Right ventricle myocardium inferior (tissue), 1 donor: ENCODE measurements at regions of chr19 and their contacts with region 1.

Region 1: GRCh38 chr19:34838753-34839431 is 65.9 kb upstream of the ZNF599 start:
- DNase-seq: no peak
- ATAC-seq: no peak

Region 2: GRCh38 chr19:34772697-34773554 is 66.0 kb before region 1 on chr19 and contains the start of gene ZNF599:
- intact Hi-C with region 1: loop called (anchors 2 kb)
- DNase-seq: peak; percentile 92
- ATAC-seq: peak; percentile 99
- total RNA-seq, gene ZNF599: 3.7 TPM

Region 3: GRCh38 chr19:34926685-34927375 is 87.9 kb after region 1 on chr19 and contains the start of gene ZNF30:
- intact Hi-C with region 1: loop called (anchors 5 kb)
- DNase-seq: peak; percentile 96
- ATAC-seq: peak; percentile 100
- total RNA-seq, gene ZNF30: 2.6 TPM

Region 4: DNA sequence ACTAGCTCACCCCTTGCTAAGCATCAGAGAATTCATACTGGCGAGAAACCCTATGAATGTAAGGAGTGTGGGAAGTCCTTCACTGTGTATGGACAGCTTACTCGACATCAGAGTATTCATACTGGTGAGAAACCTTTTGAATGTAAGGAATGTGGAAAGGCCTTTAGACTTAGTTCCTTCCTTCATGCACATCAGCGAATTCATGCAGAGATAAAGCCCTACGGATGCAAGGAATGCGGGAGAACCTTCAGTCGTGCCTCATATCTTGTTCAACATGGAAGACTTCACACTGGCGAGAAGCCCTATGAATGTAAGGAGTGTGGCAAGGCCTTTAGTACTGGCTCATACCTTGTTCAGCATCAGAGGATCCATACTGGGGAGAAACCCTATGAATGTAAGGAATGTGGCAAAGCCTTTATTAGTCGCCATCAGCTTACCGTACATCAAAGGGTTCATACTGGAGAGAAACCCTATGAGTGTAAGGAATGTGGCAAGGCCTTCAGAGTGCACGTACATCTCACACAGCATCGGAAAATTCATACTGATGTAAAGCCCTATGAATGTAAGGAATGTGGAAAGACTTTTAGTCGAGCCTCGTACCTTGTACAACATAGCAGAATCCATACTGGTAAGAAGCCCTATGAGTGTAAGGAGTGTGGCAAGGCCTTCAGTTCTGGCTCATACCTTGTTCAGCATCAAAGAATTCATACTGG is 105.1 kb after region 1 on chr19:
- intact Hi-C with region 1: no loop called
- DNase-seq: no peak
- ATAC-seq: no peak

Region 5: DNA sequence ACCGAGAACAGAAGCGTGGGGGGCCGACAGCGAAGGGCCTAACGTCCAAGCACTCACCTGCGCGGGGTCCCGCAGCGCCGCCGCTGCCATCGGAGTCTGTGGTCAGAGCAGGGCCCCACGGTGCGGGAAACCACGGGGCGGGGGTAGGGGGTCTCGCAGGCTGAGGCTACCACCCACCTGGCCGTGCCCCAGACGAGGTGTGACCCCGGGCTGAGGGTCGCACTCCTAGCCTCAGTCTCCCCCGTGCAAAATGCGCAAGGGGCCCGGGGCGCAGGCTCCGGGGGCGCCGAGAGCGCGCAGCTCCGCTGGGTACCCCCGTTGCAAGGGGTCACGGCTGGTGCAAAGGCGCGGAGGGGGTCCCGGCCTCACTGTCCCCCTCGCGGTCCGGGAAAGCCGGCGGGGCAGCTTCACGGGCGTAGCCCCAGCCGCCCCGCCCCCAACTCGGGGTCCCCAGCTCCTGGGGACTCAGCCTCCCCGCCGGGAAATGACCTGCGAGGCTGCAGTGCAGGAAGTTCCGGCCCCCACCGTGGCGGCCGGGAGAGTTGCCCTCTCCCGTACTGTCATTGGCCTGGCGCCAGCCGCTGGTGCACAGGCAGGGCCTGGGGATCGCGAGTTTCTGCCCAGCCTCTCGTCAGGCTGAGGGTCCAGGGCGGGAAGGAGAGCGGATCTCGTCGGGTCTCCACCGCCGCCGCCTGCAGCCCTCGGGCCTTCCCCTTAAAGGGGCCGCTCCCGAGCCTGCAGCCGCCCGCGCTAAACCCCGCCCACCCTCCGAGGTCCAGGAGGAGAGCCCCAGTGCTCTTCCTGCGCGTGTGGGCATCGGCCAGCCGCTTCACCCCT is 124.9 kb after region 1 on chr19 and contains the start of gene ZNF792:
- intact Hi-C with region 1: loop called (anchors 5 kb)
- DNase-seq: peak; percentile 83
- ATAC-seq: peak; percentile 88
- total RNA-seq, gene ZNF792: 3.0 TPM